CD4-positive, alpha-beta T cell (primary cell): ENCODE measurements at regions of chrX and their contacts with region 1.

Region 1: GRCh38 chrX:118974088-118974907 is at the start of gene LONRF3:
- DNase-seq: peak; percentile 36 to 86 (median 63)
- ATAC-seq: peak; percentile 49
- H3K4me3 ChIP-seq: peak within 1 kb of the TSS; percentile 68
- H3K4me3 Mint-ChIP-seq: peak within 1 kb of the TSS; percentile 93
- H3K27ac ChIP-seq: peak within 1 kb of the TSS; percentile 59 to 68
- H3K27ac Mint-ChIP-seq: peak within 1 kb of the TSS; percentile 89
- H3K4me1 ChIP-seq: peaks cover 34% of the 10 kb centered on the region
- H3K4me1 Mint-ChIP-seq: peaks cover 33% of the 10 kb centered on the region
- H3K27me3 ChIP-seq: peaks cover 3 to 6% of the 10 kb centered on the region in 2 experiments
- H3K27me3 Mint-ChIP-seq: peaks cover 35% of the 10 kb centered on the region
- CTCF ChIP-seq: no peak
- total RNA-seq, gene LONRF3: 4.9 to 5.5 TPM

Region 2: DNA sequence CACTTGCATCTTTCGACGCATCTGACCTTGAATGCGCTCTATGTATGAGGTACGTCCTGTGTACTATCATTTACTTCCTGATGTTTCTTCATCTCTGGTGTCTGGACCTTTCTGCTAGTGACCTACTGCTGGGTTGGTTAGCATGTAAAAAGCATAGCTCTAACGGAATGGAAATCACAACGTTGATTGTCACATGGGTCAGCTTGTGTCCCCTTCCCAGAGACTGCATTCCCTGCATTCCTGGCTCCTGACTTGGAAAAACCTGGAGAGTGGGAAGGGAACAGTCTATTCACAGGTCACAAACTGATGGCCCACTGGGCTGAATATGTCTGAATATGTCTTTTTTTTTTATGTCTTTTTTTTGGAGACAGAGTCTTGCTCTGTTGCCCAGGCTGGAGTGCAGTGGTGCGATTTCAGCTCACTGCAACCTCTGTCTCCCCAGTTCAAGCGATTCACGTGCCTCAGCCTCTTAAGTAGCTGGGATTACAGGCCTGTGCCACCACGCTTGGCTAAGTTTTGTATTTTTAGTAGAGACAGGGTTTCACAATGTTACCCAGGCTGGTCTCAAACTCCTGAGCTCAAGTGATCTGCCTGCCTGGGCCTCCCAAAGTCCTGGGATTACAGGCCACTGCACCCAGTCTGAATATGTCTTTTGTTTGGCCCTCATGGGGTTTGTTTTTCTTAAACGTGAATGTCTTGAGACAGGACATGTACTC is 16.4 kb after region 1 on chrX:
- CTCF ChIA-PET with region 1: no interaction called
- POLR2A ChIA-PET with region 1: interaction called, 21 read pairs
- intact Hi-C with region 1: no loop called
- DNase-seq: no peak
- ATAC-seq: no peak
- H3K4me3 ChIP-seq: no peak overlapping the region
- H3K4me3 Mint-ChIP-seq: no peak overlapping the region
- H3K27ac ChIP-seq: no peak overlapping the region
- H3K27ac Mint-ChIP-seq: peak overlapping the region; percentile 7
- H3K4me1 ChIP-seq: peaks cover 11% of the 10 kb centered on the region
- H3K4me1 Mint-ChIP-seq: peaks cover 31% of the 10 kb centered on the region
- H3K27me3 ChIP-seq: no peaks in the 10 kb centered on the region
- H3K27me3 Mint-ChIP-seq: no peaks in the 10 kb centered on the region
- CTCF ChIP-seq: no peak

Region 3: GRCh38 chrX:119004920-119005524 is 30.7 kb after region 1 on chrX:
- CTCF ChIA-PET with region 1: interaction called, 3 read pairs
- POLR2A ChIA-PET with region 1: interaction called, 11 read pairs
- intact Hi-C with region 1: loop called in 1 of 2 experiments (anchors 5 kb)
- DNase-seq: peak; percentile 8 to 68 (median 44)
- ATAC-seq: peak; percentile 77
- H3K4me3 ChIP-seq: no peak overlapping the region
- H3K4me3 Mint-ChIP-seq: no peak overlapping the region
- H3K27ac ChIP-seq: no peak overlapping the region
- H3K27ac Mint-ChIP-seq: no peak overlapping the region
- H3K4me1 ChIP-seq: no peaks in the 10 kb centered on the region
- H3K4me1 Mint-ChIP-seq: peaks cover 22% of the 10 kb centered on the region
- H3K27me3 ChIP-seq: no peaks in the 10 kb centered on the region
- H3K27me3 Mint-ChIP-seq: no peaks in the 10 kb centered on the region
- CTCF ChIP-seq: peak; percentile 70

Region 4: DNA sequence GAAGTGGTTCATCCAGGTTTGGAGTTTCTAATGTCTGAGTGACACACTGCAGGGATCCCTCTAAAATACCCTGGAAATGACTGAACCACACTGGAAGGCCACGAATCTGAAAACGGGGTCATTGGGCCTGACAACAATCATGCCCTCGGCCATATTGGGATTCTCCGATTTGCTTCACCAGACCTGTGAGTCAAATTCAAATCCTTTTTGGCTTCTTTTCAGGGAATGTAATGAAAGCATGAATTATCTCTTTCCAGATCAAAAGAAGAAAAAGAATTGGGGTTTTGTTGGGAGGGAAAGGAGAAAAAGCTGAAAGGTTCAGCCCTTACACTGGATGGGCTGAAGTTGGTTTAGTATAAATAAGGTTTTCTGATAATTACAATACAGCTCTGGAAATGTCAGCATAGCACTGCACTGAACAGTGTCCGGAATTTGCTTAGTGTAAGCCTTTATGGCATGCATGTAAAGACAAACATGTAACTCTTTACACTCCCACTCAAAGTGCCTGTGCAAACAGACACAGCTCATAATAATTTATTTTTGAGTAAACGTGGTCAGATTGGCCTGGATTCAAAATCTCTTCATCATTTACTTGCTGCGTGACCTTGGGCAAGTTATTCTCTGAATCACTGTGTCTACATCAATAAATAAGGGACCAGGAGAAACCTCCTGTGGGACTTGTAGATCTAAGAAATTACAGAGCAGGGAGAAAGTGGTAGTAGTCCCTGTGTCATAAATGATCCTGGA is 119.9 kb after region 1 on chrX:
- CTCF ChIA-PET with region 1: no interaction called
- POLR2A ChIA-PET with region 1: no interaction called
- intact Hi-C with region 1: no loop called
- DNase-seq: no peak
- ATAC-seq: no peak
- H3K4me3 ChIP-seq: no peak overlapping the region
- H3K4me3 Mint-ChIP-seq: no peak overlapping the region
- H3K27ac ChIP-seq: no peak overlapping the region
- H3K27ac Mint-ChIP-seq: no peak overlapping the region
- H3K4me1 ChIP-seq: no peaks in the 10 kb centered on the region
- H3K4me1 Mint-ChIP-seq: no peaks in the 10 kb centered on the region
- H3K27me3 ChIP-seq: peaks cover 0 to 2% of the 10 kb centered on the region in 2 experiments
- H3K27me3 Mint-ChIP-seq: peaks cover 15% of the 10 kb centered on the region
- CTCF ChIP-seq: no peak

Region 5: GRCh38 chrX:119235872-119236622 is 261.7 kb after region 1 on chrX and contains the start of gene PGRMC1:
- CTCF ChIA-PET with region 1: no interaction called
- POLR2A ChIA-PET with region 1: no interaction called
- intact Hi-C with region 1: loop called in 1 of 2 experiments (anchors 10 kb)
- DNase-seq: peak; percentile 61 to 91 (median 78)
- ATAC-seq: peak; percentile 94
- H3K4me3 ChIP-seq: peak within 1 kb of the TSS; percentile 73
- H3K4me3 Mint-ChIP-seq: peak within 1 kb of the TSS; percentile 92
- H3K27ac ChIP-seq: peak within 1 kb of the TSS in 1 of 2 donors; percentile 53
- H3K27ac Mint-ChIP-seq: peak within 1 kb of the TSS; percentile 57
- H3K4me1 ChIP-seq: peaks cover 21% of the 10 kb centered on the region
- H3K4me1 Mint-ChIP-seq: peaks cover 38% of the 10 kb centered on the region
- H3K27me3 ChIP-seq: no peaks in the 10 kb centered on the region
- H3K27me3 Mint-ChIP-seq: no peaks in the 10 kb centered on the region
- CTCF ChIP-seq: no peak
- total RNA-seq, gene PGRMC1: 14.9 to 16.0 TPM

Region 6: DNA sequence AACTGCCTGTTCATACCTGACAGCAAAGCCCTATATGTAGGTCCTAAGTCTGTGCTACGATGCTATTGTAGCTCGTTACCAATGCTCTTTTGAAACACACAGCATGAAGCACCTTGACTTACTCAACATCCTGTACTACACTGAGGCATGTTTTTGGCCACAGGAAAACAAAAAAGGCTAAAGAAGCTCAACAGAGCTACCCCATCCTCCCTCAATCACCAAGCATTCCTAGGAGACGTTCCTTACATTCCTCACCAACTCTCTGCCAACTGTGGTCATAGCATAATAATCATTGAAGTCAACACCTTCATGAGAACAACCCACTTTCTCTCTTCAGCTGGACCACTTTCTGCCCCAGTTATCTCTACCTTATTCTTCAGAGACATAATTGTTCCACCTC is 351.2 kb after region 1 on chrX:
- CTCF ChIA-PET with region 1: no interaction called
- POLR2A ChIA-PET with region 1: no interaction called
- intact Hi-C with region 1: no loop called
- DNase-seq: no peak
- ATAC-seq: no peak
- H3K4me3 ChIP-seq: no peak overlapping the region
- H3K4me3 Mint-ChIP-seq: no peak overlapping the region
- H3K27ac ChIP-seq: no peak overlapping the region
- H3K27ac Mint-ChIP-seq: no peak overlapping the region
- H3K4me1 ChIP-seq: no peaks in the 10 kb centered on the region
- H3K4me1 Mint-ChIP-seq: no peaks in the 10 kb centered on the region
- H3K27me3 ChIP-seq: no peaks in the 10 kb centered on the region
- H3K27me3 Mint-ChIP-seq: peaks cover 4% of the 10 kb centered on the region
- CTCF ChIP-seq: no peak